Activated T-helper 2 cell treated with anti-CD3 and anti-CD28 coated beads, Interferon-gamma antibody, Interleukin-2, Interleukin-4, amounts not matched to agents 10 μg/mL and 5 μg/mL and 100 μg/mL, durations not matched to agents 14 hours and 24 hours and 36 hours (primary cell): ENCODE measurements at regions of chr9 and their contacts with region 1.

Region 1: GRCh38 chr9:70484210-70485130 is 70.0 kb upstream of the KLF9 start:
- DNase-seq: no peak
- H3K4me3 Mint-ChIP-seq: no peak overlapping the region
- H3K27ac Mint-ChIP-seq: no peak overlapping the region
- H3K4me1 Mint-ChIP-seq: peaks cover 2% of the 10 kb centered on the region
- H3K27me3 Mint-ChIP-seq: no peaks in the 10 kb centered on the region

Region 2: GRCh38 chr9:70352802-70353201 is 131.7 kb before region 1 on chr9:
- intact Hi-C with region 1: loop called (anchors 10 kb)
- DNase-seq: no peak
- H3K4me3 Mint-ChIP-seq: no peak overlapping the region
- H3K27ac Mint-ChIP-seq: no peak overlapping the region
- H3K4me1 Mint-ChIP-seq: peaks cover 2% of the 10 kb centered on the region
- H3K27me3 Mint-ChIP-seq: no peaks in the 10 kb centered on the region

Region 3: DNA sequence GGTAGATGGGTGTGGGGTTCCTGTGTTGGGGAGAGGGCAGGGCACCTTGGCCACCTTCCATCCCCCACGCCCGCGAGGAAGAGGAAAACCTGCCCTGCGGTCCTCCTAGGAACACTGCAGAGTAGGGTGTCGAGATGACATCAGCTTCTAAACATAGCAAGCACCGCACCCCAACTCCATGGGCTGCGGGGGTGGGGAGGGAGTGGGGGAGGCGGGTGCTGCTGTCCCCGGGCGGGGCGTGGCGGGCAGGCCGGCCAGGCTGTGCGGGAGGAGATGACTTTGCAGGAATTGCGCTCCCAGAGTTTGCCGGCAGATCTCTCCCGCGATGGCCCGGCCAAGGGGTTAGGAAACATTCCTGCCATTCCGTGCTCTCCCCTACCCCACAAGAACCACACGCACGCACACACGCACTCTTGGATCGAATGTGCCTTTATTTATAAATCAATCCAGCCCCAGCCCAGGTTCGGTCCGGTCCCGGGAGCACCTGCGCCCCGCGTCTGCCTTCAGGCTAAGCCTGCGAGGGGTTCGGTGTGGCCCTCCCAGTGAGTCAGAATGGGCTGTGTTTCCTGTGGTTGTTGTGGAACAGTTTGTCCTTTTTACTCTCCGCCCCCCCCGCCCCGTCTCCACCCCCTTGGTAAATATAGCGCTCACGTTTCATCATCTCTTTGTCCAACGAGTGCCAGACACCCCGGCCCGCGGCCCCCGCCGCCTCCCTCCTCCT is 64.8 kb before region 1 on chr9:
- intact Hi-C with region 1: loop called (anchors 5 kb)
- DNase-seq: peak; percentile 74
- H3K4me3 Mint-ChIP-seq: peak overlapping the region; percentile 90
- H3K27ac Mint-ChIP-seq: peak overlapping the region; percentile 99
- H3K4me1 Mint-ChIP-seq: peaks cover 44% of the 10 kb centered on the region
- H3K27me3 Mint-ChIP-seq: peaks cover under 1% of the 10 kb centered on the region